Activated T-helper 1 cell treated with anti-CD3 and anti-CD28 coated beads, Interleukin-12 subunit alpha, Interleukin-12 subunit beta, Interleukin-2, Interleukin-4 antibody, amounts not matched to agents 30 ng/mL and 10 ng/mL and 1 ng/mL, durations not matched to agents 14 hours and 24 hours and 36 hours (primary cell): ENCODE measurements at regions of chr11 and their contacts with region 1.

Region 1: GRCh38 chr11:103035791-103036434 is 56.0 kb downstream of the DCUN1D5 start:
- DNase-seq: peak; percentile 47
- H3K4me3 Mint-ChIP-seq: peak overlapping the region; percentile 9
- H3K27ac Mint-ChIP-seq: peak overlapping the region; percentile 83
- H3K4me1 Mint-ChIP-seq: peaks cover 29% of the 10 kb centered on the region
- H3K27me3 Mint-ChIP-seq: no peaks in the 10 kb centered on the region

Region 2: DNA sequence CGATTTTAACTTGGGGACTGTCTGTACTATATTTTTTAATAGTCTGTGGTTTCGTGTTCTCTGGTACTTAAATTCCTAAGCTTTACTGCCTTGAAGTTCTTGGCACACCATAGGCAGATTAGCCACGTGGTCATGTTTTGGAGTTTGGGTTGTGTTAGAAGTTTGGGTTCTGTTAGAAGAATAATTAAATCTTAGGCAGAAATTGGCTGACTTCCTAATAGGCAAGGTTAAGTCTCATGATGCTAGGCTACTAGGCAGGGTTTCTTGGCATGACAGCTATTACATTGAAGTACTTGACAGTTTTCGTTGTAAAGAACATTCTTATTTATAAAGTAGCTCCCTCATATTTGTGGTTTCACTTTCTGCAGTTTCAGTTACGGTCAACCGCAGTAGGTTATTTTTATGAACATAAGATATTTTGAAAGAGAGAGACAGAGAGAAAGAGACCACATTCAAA is 475.3 kb before region 1 on chr11:
- intact Hi-C with region 1: loop called (anchors 10 kb)
- DNase-seq: no peak
- H3K4me3 Mint-ChIP-seq: peak overlapping the region; percentile 63
- H3K27ac Mint-ChIP-seq: no peak overlapping the region
- H3K4me1 Mint-ChIP-seq: peaks cover 50% of the 10 kb centered on the region
- H3K27me3 Mint-ChIP-seq: peaks cover 2% of the 10 kb centered on the region

Region 3: GRCh38 chr11:102981324-102981910 is 54.5 kb before region 1 on chr11:
- intact Hi-C with region 1: no loop called
- DNase-seq: no peak
- H3K4me3 Mint-ChIP-seq: no peak overlapping the region
- H3K27ac Mint-ChIP-seq: peak overlapping the region; percentile 45
- H3K4me1 Mint-ChIP-seq: peaks cover 8% of the 10 kb centered on the region
- H3K27me3 Mint-ChIP-seq: peaks cover 2% of the 10 kb centered on the region

Region 4: GRCh38 chr11:103055221-103055890 is 19.4 kb after region 1 on chr11:
- intact Hi-C with region 1: loop called (anchors 1 kb)
- DNase-seq: no peak
- H3K4me3 Mint-ChIP-seq: no peak overlapping the region
- H3K27ac Mint-ChIP-seq: no peak overlapping the region
- H3K4me1 Mint-ChIP-seq: peaks cover 13% of the 10 kb centered on the region
- H3K27me3 Mint-ChIP-seq: no peaks in the 10 kb centered on the region

Region 5: DNA sequence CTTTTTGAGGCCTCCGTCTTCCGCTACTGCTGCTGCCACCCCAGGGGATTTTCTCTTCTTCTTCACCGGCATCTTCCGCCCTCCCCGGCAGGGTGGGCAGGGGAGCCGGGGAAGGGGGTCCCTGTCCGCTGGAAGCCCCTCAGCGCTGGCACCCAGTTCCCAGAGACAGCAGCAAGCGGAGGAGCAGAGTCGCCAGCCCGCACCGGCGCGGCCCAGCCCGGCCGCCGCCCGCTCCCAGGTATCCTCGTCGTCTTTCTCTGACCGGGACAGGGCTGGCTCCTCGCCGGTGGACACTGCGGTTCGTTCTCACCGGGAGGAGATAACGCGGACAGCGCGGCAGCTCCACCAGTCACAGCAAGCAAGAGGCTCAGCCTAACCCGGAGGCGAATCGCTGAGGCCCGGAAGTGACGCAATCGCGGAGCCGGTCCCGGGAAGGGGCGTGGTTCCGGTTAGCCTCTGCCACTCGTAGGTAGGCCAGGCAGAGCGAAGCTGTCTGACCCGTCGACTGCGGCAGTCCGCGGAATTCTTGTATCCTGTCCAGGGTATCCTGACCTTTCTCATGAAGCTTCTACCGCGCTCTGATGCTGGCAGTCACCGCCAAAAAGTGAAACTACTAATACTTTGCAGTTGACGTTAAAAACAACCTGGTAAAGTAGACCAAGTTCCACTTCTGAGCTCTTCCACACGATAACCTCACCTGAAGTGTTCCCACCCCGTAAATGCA is 56.0 kb after region 1 on chr11 and contains the start of gene DCUN1D5:
- intact Hi-C with region 1: loop called (anchors 1 kb)
- DNase-seq: peak; percentile 94
- H3K4me3 Mint-ChIP-seq: peak within 1 kb of the TSS; percentile 94
- H3K27ac Mint-ChIP-seq: peak within 1 kb of the TSS; percentile 95
- H3K4me1 Mint-ChIP-seq: peaks cover 37% of the 10 kb centered on the region
- H3K27me3 Mint-ChIP-seq: peaks cover 22% of the 10 kb centered on the region
- total RNA-seq, gene DCUN1D5: 73.9 and 78.9 TPM in 2 replicates

Region 6: GRCh38 chr11:103358251-103358650 is 322.3 kb after region 1 on chr11:
- intact Hi-C with region 1: no loop called
- DNase-seq: no peak
- H3K4me3 Mint-ChIP-seq: no peak overlapping the region
- H3K27ac Mint-ChIP-seq: no peak overlapping the region
- H3K4me1 Mint-ChIP-seq: no peaks in the 10 kb centered on the region
- H3K27me3 Mint-ChIP-seq: no peaks in the 10 kb centered on the region

Region 7: GRCh38 chr11:103601225-103601846 is 565.4 kb after region 1 on chr11:
- intact Hi-C with region 1: loop called (anchors 5 kb)
- DNase-seq: peak; percentile 1
- H3K4me3 Mint-ChIP-seq: no peak overlapping the region
- H3K27ac Mint-ChIP-seq: no peak overlapping the region
- H3K4me1 Mint-ChIP-seq: no peaks in the 10 kb centered on the region
- H3K27me3 Mint-ChIP-seq: peaks cover 7% of the 10 kb centered on the region